ENCODE measurements at regions of chr5 and their contacts with region 1.

Region 1: DNA sequence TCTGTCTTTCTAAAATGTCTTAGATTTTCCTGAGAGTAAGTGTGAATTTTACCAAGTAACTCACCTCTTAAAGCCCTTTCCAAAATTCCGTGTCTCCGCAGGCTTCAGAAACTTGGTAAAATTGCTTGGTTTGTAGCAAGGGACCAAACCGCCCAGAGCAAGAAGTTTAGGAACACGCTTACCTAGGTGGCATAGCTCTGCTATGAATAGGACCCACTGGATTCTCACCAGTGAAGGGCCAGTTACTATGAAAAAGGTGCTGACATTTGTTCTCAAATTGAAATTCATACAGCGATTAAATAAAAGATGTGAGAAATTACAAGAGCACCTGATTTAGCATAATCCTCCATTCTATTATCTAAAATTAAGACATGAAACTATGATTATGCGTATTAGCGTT is 6.7 kb downstream of the NME5 start:
- DNase-seq: no peak
- ATAC-seq: no peak
- H3K4me3 ChIP-seq: peak overlapping the region; percentile 43
- H3K27ac ChIP-seq: no peak overlapping the region
- H3K4me1 ChIP-seq: no peaks in the 10 kb centered on the region
- H3K27me3 ChIP-seq: no peaks in the 10 kb centered on the region

Region 2: GRCh38 chr5:138035605-138036537 is 96.7 kb before region 1 on chr5:
- intact Hi-C with region 1: loop called in 1 of 4 experiments (anchors 5 kb)
- DNase-seq: peak in 2 of 3 donors; percentile 48 to 63
- ATAC-seq: peak; percentile 54
- H3K4me3 ChIP-seq: no peak overlapping the region
- H3K27ac ChIP-seq: no peak overlapping the region
- H3K4me1 ChIP-seq: no peaks in the 10 kb centered on the region
- H3K27me3 ChIP-seq: no peaks in the 10 kb centered on the region

Region 3: GRCh38 chr5:138077065-138077696 is 55.4 kb before region 1 on chr5:
- intact Hi-C with region 1: loop called (anchors 2 to 10 kb)
- DNase-seq: peak in 2 of 3 donors; percentile 48 to 82
- ATAC-seq: peak; percentile 68 to 77
- H3K4me3 ChIP-seq: no peak overlapping the region
- H3K27ac ChIP-seq: no peak overlapping the region
- H3K4me1 ChIP-seq: no peaks in the 10 kb centered on the region
- H3K27me3 ChIP-seq: no peaks in the 10 kb centered on the region

Measured in right cardiac atrium (tissue), 5 donors.